ENCODE measurements at regions of chrX and their contacts with region 1.

Region 1: GRCh38 chrX:100798484-100799214 is 21.5 kb upstream of the CSTF2 start:
- DNase-seq: no peak
- H3K4me3 ChIP-seq: no peak overlapping the region
- H3K27ac ChIP-seq: no peak overlapping the region
- H3K4me1 ChIP-seq: no peaks in the 10 kb centered on the region
- H3K27me3 ChIP-seq: no peaks in the 10 kb centered on the region
- CTCF ChIP-seq: no peak

Region 2: DNA sequence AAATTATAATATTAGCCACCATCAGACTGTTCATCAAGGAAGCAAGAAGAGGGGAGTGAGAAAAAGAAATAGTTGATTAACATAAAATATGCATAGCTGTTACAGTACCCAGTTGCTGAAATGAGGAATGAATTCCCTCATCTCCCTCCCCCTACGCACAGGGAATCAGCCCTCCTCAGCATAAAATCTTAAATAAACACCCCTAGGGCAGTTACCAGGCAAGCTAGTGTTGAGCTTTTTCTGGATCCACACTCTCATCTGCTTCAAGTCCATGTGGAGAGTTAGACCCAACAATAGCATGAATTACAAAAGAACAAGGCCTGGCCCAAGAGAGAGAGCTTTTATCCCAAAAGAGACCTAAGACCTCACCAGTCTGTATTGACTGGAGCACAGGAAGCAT is 47.8 kb before region 1 on chrX:
- CTCF ChIA-PET with region 1: no interaction called
- dilution Hi-C with region 1: loop called (anchors 5 kb)
- in situ Hi-C with region 1: no loop called
- intact Hi-C with region 1: no loop called
- DNase-seq: no peak
- H3K4me3 ChIP-seq: no peak overlapping the region
- H3K27ac ChIP-seq: no peak overlapping the region
- H3K4me1 ChIP-seq: no peaks in the 10 kb centered on the region
- H3K27me3 ChIP-seq: no peaks in the 10 kb centered on the region
- CTCF ChIP-seq: no peak